SK-N-SH (cell line): ENCODE measurements at regions of chr9 and their contacts with region 1.

Region 1: GRCh38 chr9:9942764-9943424 is 669.9 kb downstream of the PTPRD start:
- DNase-seq: peak; percentile 47
- H3K4me3 ChIP-seq: peak overlapping the region in 1 of 2 experiments; percentile 38; a peak in 1 of 4 replicates
- H3K27ac ChIP-seq: no peak overlapping the region
- H3K4me1 ChIP-seq: no peaks in the 10 kb centered on the region
- H3K27me3 ChIP-seq: no peaks in the 10 kb centered on the region
- CTCF ChIP-seq: peak; percentile 98
- EP300 ChIP-seq: no peak
- RAD21 ChIP-seq: peak; percentile 86

Region 2: GRCh38 chr9:9605681-9606080 is 337.2 kb before region 1 on chr9:
- CTCF ChIA-PET with region 1: interaction called, 69 read pairs
- POLR2A ChIA-PET with region 1: no interaction called
- DNase-seq: no peak
- H3K4me3 ChIP-seq: no peak overlapping the region
- H3K27ac ChIP-seq: no peak overlapping the region
- H3K4me1 ChIP-seq: no peaks in the 10 kb centered on the region; a peak in 1 of 4 replicates
- H3K27me3 ChIP-seq: no peaks in the 10 kb centered on the region
- CTCF ChIP-seq: no peak
- EP300 ChIP-seq: no peak
- RAD21 ChIP-seq: no peak

Region 3: DNA sequence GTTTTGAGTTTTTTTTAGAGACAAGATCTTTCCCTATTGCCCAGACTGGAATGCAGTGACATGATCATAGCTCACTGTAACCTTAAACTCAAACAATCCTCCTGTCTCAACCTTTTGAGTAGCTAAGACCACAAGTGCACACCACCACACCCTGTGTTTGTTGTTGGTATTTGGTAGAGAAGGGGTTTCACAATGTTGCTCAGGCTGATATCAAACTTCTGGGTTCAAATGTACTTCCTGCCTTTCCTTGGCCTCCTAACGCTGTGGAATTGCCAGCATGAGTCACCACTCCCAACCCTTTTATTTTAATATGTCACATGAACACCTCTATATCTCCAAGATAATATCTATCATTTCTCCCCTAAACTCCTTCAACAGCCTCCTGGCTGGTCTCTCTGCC is 49.1 kb before region 1 on chr9:
- CTCF ChIA-PET with region 1: interaction called, 10 read pairs
- POLR2A ChIA-PET with region 1: no interaction called
- DNase-seq: no peak
- H3K4me3 ChIP-seq: no peak overlapping the region
- H3K27ac ChIP-seq: no peak overlapping the region
- H3K4me1 ChIP-seq: no peaks in the 10 kb centered on the region
- H3K27me3 ChIP-seq: no peaks in the 10 kb centered on the region
- CTCF ChIP-seq: no peak
- EP300 ChIP-seq: no peak
- RAD21 ChIP-seq: no peak

Region 4: GRCh38 chr9:9920425-9921060 is 22.4 kb before region 1 on chr9:
- CTCF ChIA-PET with region 1: interaction called, 24 read pairs
- POLR2A ChIA-PET with region 1: no interaction called
- DNase-seq: peak; percentile 3
- H3K4me3 ChIP-seq: no peak overlapping the region
- H3K27ac ChIP-seq: no peak overlapping the region
- H3K4me1 ChIP-seq: no peaks in the 10 kb centered on the region; a peak in 1 of 4 replicates
- H3K27me3 ChIP-seq: no peaks in the 10 kb centered on the region
- CTCF ChIP-seq: peak; percentile 30
- EP300 ChIP-seq: no peak
- RAD21 ChIP-seq: no peak; the same call in 1 of the 2 replicates

Region 5: GRCh38 chr9:9970514-9970913 is 27.6 kb after region 1 on chr9:
- CTCF ChIA-PET with region 1: interaction called, 19 read pairs
- POLR2A ChIA-PET with region 1: no interaction called
- DNase-seq: no peak
- H3K4me3 ChIP-seq: no peak overlapping the region
- H3K27ac ChIP-seq: no peak overlapping the region
- H3K4me1 ChIP-seq: no peaks in the 10 kb centered on the region
- H3K27me3 ChIP-seq: no peaks in the 10 kb centered on the region
- CTCF ChIP-seq: no peak
- EP300 ChIP-seq: no peak
- RAD21 ChIP-seq: no peak